ENCODE measurements at regions of chr16 and their contacts with region 1.

Region 1: DNA sequence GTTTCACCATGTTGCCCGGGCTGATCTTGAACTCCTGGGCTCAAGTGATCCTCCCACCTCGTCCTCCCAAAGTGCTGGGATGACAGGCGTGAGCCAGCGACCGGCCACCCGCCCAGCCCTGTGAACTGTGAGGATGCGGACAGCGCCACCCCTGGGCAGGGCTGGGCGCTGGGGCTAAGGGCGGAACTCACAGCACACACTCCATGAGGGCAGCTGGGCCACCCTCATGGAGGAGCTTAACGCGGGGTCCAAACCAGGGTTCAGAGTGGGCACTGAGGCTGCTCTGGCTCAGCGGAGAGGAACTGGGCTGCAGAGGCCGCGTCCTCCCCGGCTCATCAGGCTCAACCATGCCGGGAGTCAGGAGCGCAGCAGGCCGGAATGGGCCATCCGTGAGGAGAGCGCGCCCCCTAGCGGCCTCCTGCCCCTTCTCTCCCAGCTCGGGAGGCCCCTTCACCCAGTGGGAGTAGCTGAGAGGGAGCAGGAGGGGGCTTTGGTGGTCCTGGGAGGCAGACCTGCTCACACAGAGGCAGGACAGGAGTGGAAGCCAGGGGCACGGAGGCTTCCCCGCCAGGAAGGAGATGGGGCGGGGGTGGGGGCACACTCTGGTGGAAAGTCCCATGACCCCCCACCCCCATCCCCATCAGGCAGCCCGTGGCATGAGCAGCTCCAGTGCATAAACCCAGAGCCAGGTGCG is 13.8 kb downstream of the CORO7 start:
- DNase-seq: peak; percentile 59
- H3K4me3 ChIP-seq: no peak overlapping the region
- H3K27ac ChIP-seq: no peak overlapping the region
- H3K4me1 ChIP-seq: peaks cover 1% of the 10 kb centered on the region
- H3K27me3 ChIP-seq: no peaks in the 10 kb centered on the region
- CTCF ChIP-seq: peak; percentile 88 to 98
- POLR2A ChIP-seq: no peak

Region 2: GRCh38 chr16:4190086-4190485 is 212.5 kb before region 1 on chr16:
- CTCF ChIA-PET with region 1: no interaction called
- POLR2A ChIA-PET with region 1: no interaction called
- dilution Hi-C with region 1: no loop called
- intact Hi-C with region 1: no loop called
- DNase-seq: no peak
- H3K4me3 ChIP-seq: no peak overlapping the region
- H3K27ac ChIP-seq: no peak overlapping the region
- H3K4me1 ChIP-seq: no peaks in the 10 kb centered on the region
- H3K27me3 ChIP-seq: no peaks in the 10 kb centered on the region
- CTCF ChIP-seq: no peak
- POLR2A ChIP-seq: no peak

Region 3: DNA sequence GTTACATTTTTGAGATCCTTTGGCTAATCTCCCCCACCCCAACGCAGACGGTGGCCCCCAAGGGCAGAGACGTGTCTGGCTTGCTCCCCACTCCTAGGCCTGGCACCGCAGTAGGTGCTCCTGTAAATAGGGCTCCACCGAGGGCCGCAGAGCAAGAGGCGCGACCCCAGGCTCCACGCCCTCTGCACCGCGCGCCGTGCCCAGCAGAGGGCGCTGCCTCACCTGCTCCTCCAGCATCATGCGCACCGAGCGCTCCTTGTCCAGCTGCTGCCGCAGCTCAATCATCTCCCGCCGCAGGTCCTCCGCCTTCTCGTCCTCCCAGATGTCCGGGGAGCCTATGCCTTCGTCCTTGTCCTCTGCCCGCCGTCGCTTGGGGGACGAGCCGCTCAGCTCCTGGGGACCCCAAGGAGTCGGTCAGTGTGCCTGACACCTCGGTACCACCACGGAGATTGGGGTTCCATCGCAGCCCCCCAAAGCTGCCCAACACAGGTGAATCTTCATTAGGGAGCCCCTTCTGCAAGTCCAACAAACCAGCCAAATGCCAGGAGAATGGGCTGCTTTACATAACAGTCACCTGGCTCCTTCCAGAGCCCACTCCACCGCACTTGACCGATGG is 140.9 kb before region 1 on chr16:
- CTCF ChIA-PET with region 1: interaction called, 31 read pairs
- POLR2A ChIA-PET with region 1: interaction called, 3 read pairs
- dilution Hi-C with region 1: no loop called
- intact Hi-C with region 1: no loop called
- DNase-seq: peak; percentile 14
- H3K4me3 ChIP-seq: no peak overlapping the region
- H3K27ac ChIP-seq: no peak overlapping the region
- H3K4me1 ChIP-seq: no peaks in the 10 kb centered on the region
- H3K27me3 ChIP-seq: no peaks in the 10 kb centered on the region
- CTCF ChIP-seq: peak; percentile 77
- POLR2A ChIP-seq: no peak

Region 4: DNA sequence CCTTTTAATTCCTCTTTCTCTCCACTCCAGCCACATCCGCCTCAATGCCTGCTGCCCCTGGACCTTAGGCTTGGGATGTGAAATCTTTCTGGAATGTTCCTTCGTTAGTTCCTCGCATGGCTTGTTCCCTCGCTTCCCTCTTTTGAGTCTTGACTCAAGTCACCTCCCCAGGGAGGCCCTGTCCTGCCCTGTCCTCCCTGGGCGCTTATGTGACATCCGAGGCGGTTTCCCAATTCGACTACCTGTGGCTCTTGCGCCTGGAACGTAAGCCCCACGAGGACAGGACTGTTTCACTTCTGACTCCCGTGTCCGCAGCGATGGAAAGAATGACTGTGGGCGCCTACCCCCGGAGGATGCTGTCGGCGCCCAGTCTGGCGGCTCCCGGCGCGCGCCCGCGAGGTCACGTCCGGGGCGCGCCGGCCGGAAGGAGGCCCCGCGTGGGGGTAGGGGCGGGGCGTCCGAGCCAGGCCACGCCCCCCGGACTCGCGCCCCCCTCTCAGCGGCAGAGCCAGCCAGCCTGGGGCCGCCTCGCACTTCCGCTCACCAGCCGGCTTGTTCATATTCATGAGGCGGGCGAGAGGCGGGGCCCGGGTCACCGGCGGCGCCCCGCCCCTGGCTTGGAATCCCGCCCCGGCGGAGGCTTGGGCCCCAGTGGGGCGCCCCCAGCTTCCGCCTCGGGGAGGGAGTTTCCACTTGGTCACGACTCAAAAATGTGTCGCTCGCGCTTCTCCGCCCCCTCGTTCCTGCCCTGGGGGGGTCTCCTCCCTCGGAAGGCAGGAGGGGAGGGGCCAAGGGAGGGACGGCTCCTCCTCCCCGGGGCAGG is 95.2 kb before region 1 on chr16:
- CTCF ChIA-PET with region 1: interaction called, 24 read pairs
- POLR2A ChIA-PET with region 1: no interaction called
- dilution Hi-C with region 1: no loop called
- intact Hi-C with region 1: no loop called
- DNase-seq: peak; percentile 88
- H3K4me3 ChIP-seq: peak overlapping the region in 2 of 3 experiments; percentile 25 to 33
- H3K27ac ChIP-seq: peak overlapping the region; percentile 76
- H3K4me1 ChIP-seq: peaks cover 7% of the 10 kb centered on the region
- H3K27me3 ChIP-seq: no peaks in the 10 kb centered on the region
- CTCF ChIP-seq: no peak
- POLR2A ChIP-seq: no peak

Region 5: DNA sequence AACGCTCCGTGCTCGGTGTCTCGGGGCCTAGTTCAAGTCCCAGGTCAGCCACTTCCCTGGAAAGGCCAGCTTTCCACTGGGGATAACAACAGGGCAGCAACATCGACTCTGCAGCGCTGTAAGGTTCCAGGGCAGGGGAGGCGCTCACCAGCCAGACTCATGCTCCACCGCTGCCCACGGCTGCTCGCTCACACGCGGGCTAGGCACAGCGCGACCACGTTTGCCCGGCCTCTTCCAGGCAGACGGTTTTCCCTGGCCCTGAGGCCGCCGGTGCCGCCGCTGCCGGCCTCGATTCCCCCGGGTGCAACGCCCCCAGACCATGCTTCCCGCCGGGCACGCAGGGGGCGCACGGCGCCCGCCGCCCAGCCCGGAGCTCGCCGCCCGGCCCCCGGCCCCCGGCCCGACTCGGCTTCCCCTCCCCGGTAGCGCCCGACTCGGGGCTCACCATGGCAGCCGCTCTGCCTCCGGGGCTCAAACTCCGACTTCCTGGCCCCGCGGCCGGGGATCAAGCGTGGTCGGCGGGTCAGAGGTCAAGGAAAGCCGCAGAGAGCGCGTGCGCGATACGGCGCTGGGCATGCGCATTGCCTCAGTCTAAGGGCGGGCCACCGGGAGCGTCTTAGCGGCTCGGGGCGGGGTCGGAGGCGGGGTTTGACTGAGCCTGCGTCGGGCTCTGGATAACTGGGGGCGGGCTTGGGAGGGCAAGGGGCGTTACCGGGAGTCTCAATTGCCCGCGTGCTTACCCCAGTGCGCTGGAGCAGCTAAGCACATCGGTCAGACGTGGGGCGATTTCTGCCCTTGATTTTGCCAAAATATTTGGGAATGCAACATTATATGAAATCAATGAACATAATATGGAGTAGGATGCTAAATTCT is 51.6 kb before region 1 on chr16 and contains the start of gene PAM16:
- CTCF ChIA-PET with region 1: interaction called, 42 read pairs
- POLR2A ChIA-PET with region 1: no interaction called
- dilution Hi-C with region 1: no loop called
- intact Hi-C with region 1: no loop called
- DNase-seq: peak; percentile 93
- H3K4me3 ChIP-seq: peak within 1 kb of the TSS; percentile 1 to 81 (median 47)
- H3K27ac ChIP-seq: no peak within 1 kb of the TSS
- H3K4me1 ChIP-seq: peaks cover 7% of the 10 kb centered on the region
- H3K27me3 ChIP-seq: no peaks in the 10 kb centered on the region
- CTCF ChIP-seq: peak in 1 of 2 donors; percentile 7
- POLR2A ChIP-seq: peak; percentile 45
- total RNA-seq, gene PAM16: 35.8 and 40.0 TPM in 2 replicates

Region 6: GRCh38 chr16:4386451-4386805 is 16.2 kb before region 1 on chr16:
- CTCF ChIA-PET with region 1: interaction called, 63 read pairs
- POLR2A ChIA-PET with region 1: no interaction called
- dilution Hi-C with region 1: no loop called
- intact Hi-C with region 1: no loop called
- DNase-seq: no peak
- H3K4me3 ChIP-seq: no peak overlapping the region
- H3K27ac ChIP-seq: no peak overlapping the region
- H3K4me1 ChIP-seq: peaks cover 22% of the 10 kb centered on the region
- H3K27me3 ChIP-seq: no peaks in the 10 kb centered on the region
- CTCF ChIP-seq: no peak
- POLR2A ChIP-seq: no peak